AG04450 (cell line): ENCODE measurements at regions of chr5 and their contacts with region 1.

Region 1: DNA sequence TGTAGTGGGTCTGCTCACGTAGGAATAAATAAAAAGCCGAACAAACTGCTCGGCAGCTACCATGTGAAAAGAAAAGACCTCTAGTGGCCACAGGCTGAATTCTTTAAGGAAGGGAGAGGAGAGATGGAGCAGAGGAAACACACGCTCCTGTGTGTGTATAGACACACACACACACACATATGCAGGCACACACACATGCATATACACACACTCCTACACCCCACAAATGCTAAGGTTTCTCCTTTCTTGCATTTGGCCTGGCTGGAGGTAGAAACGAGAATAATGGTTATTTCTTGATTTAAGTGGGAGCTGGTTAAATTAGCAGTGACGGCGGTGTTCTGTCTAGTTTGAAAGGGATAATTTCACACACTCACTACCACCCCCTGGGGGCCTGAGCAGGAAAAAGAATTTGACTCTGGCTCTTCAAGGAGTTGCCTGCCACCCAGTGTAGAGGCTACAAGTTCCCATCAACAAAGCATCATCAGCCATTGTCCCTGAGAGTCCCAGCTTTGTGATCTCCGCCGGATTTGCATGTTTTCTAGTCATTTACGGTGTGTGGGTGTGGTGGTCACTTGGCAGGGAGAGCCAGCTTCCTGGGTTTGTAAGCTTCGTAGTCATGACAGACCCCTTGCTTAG is at the start of gene INSYN2B:
- DNase-seq: peak; percentile 71
- H3K4me3 ChIP-seq: peak within 1 kb of the TSS; percentile 76
- H3K27ac ChIP-seq: peak within 1 kb of the TSS; percentile 57
- H3K27me3 ChIP-seq: no peaks in the 10 kb centered on the region
- CTCF ChIP-seq: peak; percentile 66
- polyA plus RNA-seq, gene INSYN2B: 6.1 and 6.8 TPM in 2 replicates

Region 2: GRCh38 chr5:169583424-169584204 is 396.9 kb before region 1 on chr5 and contains the start of gene SPDL1:
- CTCF ChIA-PET with region 1: interaction called, 38 read pairs
- POLR2A ChIA-PET with region 1: no interaction called
- DNase-seq: peak; percentile 93
- H3K4me3 ChIP-seq: peak within 1 kb of the TSS; percentile 86
- H3K27ac ChIP-seq: peak within 1 kb of the TSS; percentile 77
- H3K27me3 ChIP-seq: no peaks in the 10 kb centered on the region
- CTCF ChIP-seq: no peak
- polyA plus RNA-seq, gene SPDL1: 14.0 and 22.7 TPM in 2 replicates

Region 3: GRCh38 chr5:169682026-169682425 is 298.5 kb before region 1 on chr5:
- CTCF ChIA-PET with region 1: interaction called, 14 read pairs
- POLR2A ChIA-PET with region 1: no interaction called
- DNase-seq: no peak
- H3K4me3 ChIP-seq: no peak overlapping the region
- H3K27ac ChIP-seq: no peak overlapping the region
- H3K27me3 ChIP-seq: no peaks in the 10 kb centered on the region
- CTCF ChIP-seq: no peak

Region 4: DNA sequence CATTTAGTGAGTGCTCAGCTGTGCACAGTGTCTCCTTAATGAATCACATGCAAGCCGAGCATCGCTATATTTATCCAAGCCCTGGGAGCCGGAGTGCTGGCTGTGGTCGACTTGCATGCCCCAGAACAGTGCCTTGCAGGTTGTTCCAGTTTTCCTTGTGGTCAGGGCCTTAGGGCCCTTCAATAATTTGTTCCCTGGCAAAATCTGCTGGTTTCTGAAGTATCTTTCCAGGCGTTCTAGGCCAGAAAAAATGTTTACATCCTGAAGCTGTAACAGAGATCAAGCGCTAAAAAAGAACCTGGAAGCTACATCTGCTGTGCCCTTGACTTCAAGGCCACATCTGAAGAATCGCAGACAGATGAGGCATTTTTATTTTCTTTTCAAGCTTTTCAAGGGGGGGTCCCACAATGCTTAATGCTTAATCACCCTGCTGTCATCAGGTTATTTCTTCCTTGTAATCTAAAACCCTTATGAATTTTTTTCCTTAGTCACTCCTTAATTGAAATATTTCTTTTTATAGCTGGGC is 237.7 kb before region 1 on chr5:
- CTCF ChIA-PET with region 1: interaction called, 25 read pairs
- POLR2A ChIA-PET with region 1: no interaction called
- DNase-seq: peak; percentile 59
- H3K4me3 ChIP-seq: no peak overlapping the region
- H3K27ac ChIP-seq: peak overlapping the region; percentile 75
- H3K27me3 ChIP-seq: no peaks in the 10 kb centered on the region
- CTCF ChIP-seq: no peak

Region 5: GRCh38 chr5:169805527-169805934 is 175.0 kb before region 1 on chr5:
- CTCF ChIA-PET with region 1: interaction called, 47 read pairs
- POLR2A ChIA-PET with region 1: interaction called, 6 read pairs
- DNase-seq: no peak
- H3K4me3 ChIP-seq: no peak overlapping the region
- H3K27ac ChIP-seq: peak overlapping the region; percentile 93
- H3K27me3 ChIP-seq: no peaks in the 10 kb centered on the region
- CTCF ChIP-seq: no peak

Region 6: GRCh38 chr5:169895926-169896325 is 84.6 kb before region 1 on chr5:
- CTCF ChIA-PET with region 1: interaction called, 21 read pairs
- POLR2A ChIA-PET with region 1: interaction called, 4 read pairs
- DNase-seq: no peak
- H3K4me3 ChIP-seq: no peak overlapping the region
- H3K27ac ChIP-seq: no peak overlapping the region
- H3K27me3 ChIP-seq: no peaks in the 10 kb centered on the region
- CTCF ChIP-seq: no peak

Region 7: GRCh38 chr5:169945831-169946261 is 34.7 kb before region 1 on chr5:
- CTCF ChIA-PET with region 1: interaction called, 33 read pairs
- POLR2A ChIA-PET with region 1: interaction called, 6 read pairs
- DNase-seq: peak; percentile 86
- H3K4me3 ChIP-seq: peak overlapping the region; percentile 23
- H3K27ac ChIP-seq: peak overlapping the region; percentile 96
- H3K27me3 ChIP-seq: no peaks in the 10 kb centered on the region
- CTCF ChIP-seq: no peak

Region 8: GRCh38 chr5:170092455-170093101 is 112.0 kb after region 1 on chr5:
- CTCF ChIA-PET with region 1: no interaction called
- POLR2A ChIA-PET with region 1: no interaction called
- DNase-seq: no peak
- H3K4me3 ChIP-seq: no peak overlapping the region
- H3K27ac ChIP-seq: no peak overlapping the region
- H3K27me3 ChIP-seq: no peaks in the 10 kb centered on the region
- CTCF ChIP-seq: no peak